ENCODE measurements at regions of chr14 and their contacts with region 1.

Region 1: GRCh38 chr14:30283826-30284446 is 275.0 kb upstream of the G2E3 start:
- DNase-seq: peak; percentile 37
- ATAC-seq: peak; percentile 85
- H3K4me3 ChIP-seq: no peak overlapping the region
- H3K27ac ChIP-seq: no peak overlapping the region
- H3K4me1 ChIP-seq: no peaks in the 10 kb centered on the region
- H3K27me3 ChIP-seq: no peaks in the 10 kb centered on the region
- CTCF ChIP-seq: peak; percentile 68
- EP300 ChIP-seq: no peak
- POLR2A ChIP-seq: no peak
- RAD21 ChIP-seq: no peak

Region 2: DNA sequence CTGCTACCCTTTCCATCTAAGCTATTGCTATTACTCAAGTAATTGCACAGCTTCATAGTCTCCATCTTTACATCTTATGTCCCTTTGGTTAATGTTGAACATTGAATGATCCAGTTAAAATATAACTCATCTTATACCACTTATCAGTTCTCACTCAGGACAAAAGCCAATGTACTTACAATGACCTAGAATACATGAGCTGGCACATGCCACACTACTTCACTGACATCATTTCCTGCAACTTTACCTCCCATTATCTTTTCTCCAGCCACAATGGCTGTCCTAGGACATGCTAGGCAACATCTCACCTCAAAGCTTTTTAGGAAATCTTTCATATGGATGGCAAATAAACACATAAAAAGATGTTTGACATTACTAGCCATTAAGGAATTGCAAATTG is 1208.2 kb before region 1 on chr14:
- CTCF ChIA-PET with region 1: no interaction called
- POLR2A ChIA-PET with region 1: no interaction called
- in situ Hi-C with region 1: no loop called
- intact Hi-C with region 1: loop called (anchors 2 kb)
- DNase-seq: no peak
- ATAC-seq: no peak
- H3K4me3 ChIP-seq: no peak overlapping the region
- H3K27ac ChIP-seq: no peak overlapping the region
- H3K4me1 ChIP-seq: no peaks in the 10 kb centered on the region
- H3K27me3 ChIP-seq: no peaks in the 10 kb centered on the region
- CTCF ChIP-seq: no peak
- EP300 ChIP-seq: no peak
- POLR2A ChIP-seq: no peak
- RAD21 ChIP-seq: no peak

Region 3: DNA sequence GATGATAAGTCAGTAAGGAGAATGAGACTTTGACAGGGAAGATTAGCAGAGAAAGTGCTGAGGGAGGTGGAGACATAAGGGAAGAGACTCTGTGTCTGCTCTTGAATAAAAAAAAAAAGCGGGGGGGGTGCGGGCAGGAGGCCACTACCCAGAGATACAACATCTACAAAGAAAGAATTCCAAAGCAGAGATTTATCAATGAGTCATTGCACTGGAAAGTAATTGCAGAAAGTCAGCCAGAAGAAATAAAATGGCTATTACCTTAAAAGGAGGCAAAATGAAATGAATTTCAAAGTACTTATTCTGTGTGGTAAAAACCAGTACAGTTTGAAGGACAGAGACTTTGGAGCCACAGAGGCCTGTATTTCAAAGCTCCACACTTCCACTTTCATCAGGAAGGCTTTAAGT is 89.2 kb before region 1 on chr14:
- CTCF ChIA-PET with region 1: no interaction called
- POLR2A ChIA-PET with region 1: no interaction called
- in situ Hi-C with region 1: no loop called
- intact Hi-C with region 1: no loop called
- DNase-seq: no peak
- ATAC-seq: no peak
- H3K4me3 ChIP-seq: no peak overlapping the region
- H3K27ac ChIP-seq: no peak overlapping the region
- H3K4me1 ChIP-seq: no peaks in the 10 kb centered on the region
- H3K27me3 ChIP-seq: no peaks in the 10 kb centered on the region
- CTCF ChIP-seq: no peak
- EP300 ChIP-seq: no peak
- POLR2A ChIP-seq: no peak
- RAD21 ChIP-seq: no peak

Region 4: DNA sequence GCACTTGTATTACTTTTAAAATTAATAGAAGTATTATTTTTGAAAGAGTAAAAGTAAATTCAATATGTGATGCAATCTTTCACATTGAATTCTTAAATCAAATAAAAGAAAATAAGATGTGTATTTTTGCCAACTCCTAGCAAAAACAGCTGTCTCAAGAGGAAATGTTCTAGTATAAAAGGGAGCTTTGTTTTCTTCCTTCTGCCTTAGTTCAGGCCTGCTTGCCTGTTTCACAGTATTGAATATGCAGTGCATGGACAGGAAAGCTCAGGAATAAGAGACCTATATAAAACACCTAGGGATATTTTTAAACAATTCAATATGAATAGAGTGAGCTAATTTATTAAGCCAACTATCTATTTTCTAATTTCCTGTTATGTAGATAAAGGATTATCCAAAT is 19.8 kb before region 1 on chr14:
- CTCF ChIA-PET with region 1: no interaction called
- POLR2A ChIA-PET with region 1: no interaction called
- in situ Hi-C with region 1: no loop called
- intact Hi-C with region 1: no loop called
- DNase-seq: no peak
- ATAC-seq: no peak
- H3K4me3 ChIP-seq: no peak overlapping the region
- H3K27ac ChIP-seq: no peak overlapping the region
- H3K4me1 ChIP-seq: no peaks in the 10 kb centered on the region
- H3K27me3 ChIP-seq: no peaks in the 10 kb centered on the region
- CTCF ChIP-seq: no peak
- EP300 ChIP-seq: no peak
- POLR2A ChIP-seq: no peak
- RAD21 ChIP-seq: no peak

Region 5: DNA sequence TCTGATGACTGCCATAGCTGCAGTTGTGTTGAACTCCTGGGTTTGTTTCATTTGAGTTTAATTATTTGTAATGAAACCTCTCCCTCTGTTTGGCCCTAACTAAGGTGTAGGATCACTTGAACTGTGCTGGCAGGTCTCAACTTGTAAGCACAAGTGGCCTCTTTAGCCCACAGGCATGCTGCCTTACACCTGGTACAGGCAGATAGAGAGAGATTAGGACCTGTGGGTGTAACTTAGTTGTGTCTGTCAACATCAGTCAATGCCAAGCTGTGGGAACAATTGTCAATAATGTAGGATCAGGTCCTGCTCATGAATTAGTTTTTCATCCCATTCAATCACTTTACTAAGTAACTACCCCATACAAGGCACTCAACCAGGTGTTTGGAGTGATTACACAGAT is 12.0 kb after region 1 on chr14:
- CTCF ChIA-PET with region 1: no interaction called
- POLR2A ChIA-PET with region 1: no interaction called
- in situ Hi-C with region 1: no loop called
- intact Hi-C with region 1: no loop called
- DNase-seq: no peak
- ATAC-seq: 0 out of 3 replicates have a peak, but pooled peaks have one; percentile 27
- H3K4me3 ChIP-seq: no peak overlapping the region
- H3K27ac ChIP-seq: no peak overlapping the region
- H3K4me1 ChIP-seq: no peaks in the 10 kb centered on the region
- H3K27me3 ChIP-seq: no peaks in the 10 kb centered on the region
- CTCF ChIP-seq: no peak
- EP300 ChIP-seq: no peak
- POLR2A ChIP-seq: no peak
- RAD21 ChIP-seq: no peak

Region 6: GRCh38 chr14:30691751-30692398 is 407.9 kb after region 1 on chr14:
- CTCF ChIA-PET with region 1: no interaction called
- POLR2A ChIA-PET with region 1: no interaction called
- in situ Hi-C with region 1: no loop called
- intact Hi-C with region 1: no loop called
- DNase-seq: no peak
- ATAC-seq: no peak
- H3K4me3 ChIP-seq: peak overlapping the region in 2 of 3 experiments; percentile 69 to 70; a peak in 3 of 6 replicates
- H3K27ac ChIP-seq: peak overlapping the region; percentile 74
- H3K4me1 ChIP-seq: peaks cover 21% of the 10 kb centered on the region
- H3K27me3 ChIP-seq: no peaks in the 10 kb centered on the region
- CTCF ChIP-seq: no peak
- EP300 ChIP-seq: no peak
- POLR2A ChIP-seq: no peak
- RAD21 ChIP-seq: no peak